B cell (primary cell): ENCODE measurements at regions of chr1 and their contacts with region 1.

Region 1: GRCh38 chr1:156689035-156689952 is 12.1 kb upstream of the NES start:
- DNase-seq: peak; percentile 85
- ATAC-seq: peak; percentile 98
- H3K4me3 ChIP-seq: no peak overlapping the region
- H3K4me3 Mint-ChIP-seq: no peak overlapping the region
- H3K27ac ChIP-seq: no peak overlapping the region
- H3K27ac Mint-ChIP-seq: no peak overlapping the region
- H3K4me1 ChIP-seq: peaks cover 11 to 25% of the 10 kb centered on the region in 2 donors
- H3K4me1 Mint-ChIP-seq: peaks cover 19% of the 10 kb centered on the region
- H3K27me3 ChIP-seq: peaks cover 0 to 68% (median 31%) of the 10 kb centered on the region in 4 experiments
- H3K27me3 Mint-ChIP-seq: peaks cover 48% of the 10 kb centered on the region
- CTCF ChIP-seq: peak; percentile 95

Region 2: GRCh38 chr1:156435545-156436141 is 253.7 kb before region 1 on chr1:
- CTCF ChIA-PET with region 1: no interaction called
- POLR2A ChIA-PET with region 1: no interaction called
- intact Hi-C with region 1: no loop called
- DNase-seq: peak; percentile 81
- ATAC-seq: peak; percentile 58
- H3K4me3 ChIP-seq: peak overlapping the region; percentile 16 to 69 (median 41)
- H3K4me3 Mint-ChIP-seq: peak overlapping the region; percentile 87
- H3K27ac ChIP-seq: no peak overlapping the region
- H3K27ac Mint-ChIP-seq: no peak overlapping the region
- H3K4me1 ChIP-seq: peaks cover 32 to 41% of the 10 kb centered on the region in 2 donors
- H3K4me1 Mint-ChIP-seq: peaks cover 20% of the 10 kb centered on the region
- H3K27me3 ChIP-seq: peaks cover 0 to 93% (median 82%) of the 10 kb centered on the region in 4 experiments
- H3K27me3 Mint-ChIP-seq: peaks cover 82% of the 10 kb centered on the region
- CTCF ChIP-seq: no peak

Region 3: DNA sequence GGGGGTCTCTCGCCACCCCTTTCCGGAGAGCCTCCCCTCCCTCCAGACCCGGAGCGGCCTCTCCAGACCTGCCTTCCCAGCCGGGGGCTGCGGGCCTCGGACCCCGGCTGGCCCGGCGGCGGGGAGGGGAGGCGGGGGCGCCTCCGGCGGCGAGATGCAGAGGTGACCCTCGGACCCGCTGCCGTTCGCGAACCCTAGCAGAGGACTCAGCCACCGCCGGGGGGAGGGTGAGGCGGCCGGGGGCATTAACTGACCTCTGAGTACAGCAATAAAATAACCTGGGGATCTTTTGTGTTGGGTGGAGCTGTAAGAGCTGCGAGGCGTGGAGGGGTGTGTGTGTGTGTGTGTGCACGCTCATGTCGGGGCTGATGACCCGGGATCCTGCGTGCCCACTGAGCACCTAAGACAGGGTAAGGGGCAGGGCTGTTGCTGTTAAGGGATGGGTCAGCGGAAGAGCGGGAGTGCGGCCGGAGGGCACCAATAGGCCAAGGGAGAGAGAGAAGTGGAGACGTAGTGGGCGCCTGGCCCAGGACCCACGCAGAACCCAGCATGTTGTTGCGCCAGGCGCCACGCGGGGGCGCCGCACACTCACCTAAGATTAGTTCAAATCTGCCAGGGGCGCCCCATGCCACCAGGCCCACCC is 63.7 kb before region 1 on chr1:
- CTCF ChIA-PET with region 1: interaction called, 16 read pairs
- POLR2A ChIA-PET with region 1: no interaction called
- intact Hi-C with region 1: no loop called
- DNase-seq: peak; percentile 86
- ATAC-seq: peak; percentile 75
- H3K4me3 ChIP-seq: peak overlapping the region in 4 of 5 experiments; percentile 19 to 50 (median 47)
- H3K4me3 Mint-ChIP-seq: peak overlapping the region; percentile 84
- H3K27ac ChIP-seq: no peak overlapping the region
- H3K27ac Mint-ChIP-seq: peak overlapping the region; percentile 2
- H3K4me1 ChIP-seq: peaks cover 22 to 26% of the 10 kb centered on the region in 2 donors
- H3K4me1 Mint-ChIP-seq: peaks cover 15% of the 10 kb centered on the region
- H3K27me3 ChIP-seq: peaks cover 2 to 66% (median 27%) of the 10 kb centered on the region in 4 experiments
- H3K27me3 Mint-ChIP-seq: peaks cover 49% of the 10 kb centered on the region
- CTCF ChIP-seq: peak; percentile 91

Region 4: GRCh38 chr1:156654700-156655099 is 34.6 kb before region 1 on chr1:
- CTCF ChIA-PET with region 1: no interaction called
- POLR2A ChIA-PET with region 1: no interaction called
- intact Hi-C with region 1: no loop called
- DNase-seq: no peak
- ATAC-seq: no peak
- H3K4me3 ChIP-seq: no peak overlapping the region
- H3K4me3 Mint-ChIP-seq: no peak overlapping the region
- H3K27ac ChIP-seq: no peak overlapping the region
- H3K27ac Mint-ChIP-seq: no peak overlapping the region
- H3K4me1 ChIP-seq: peaks cover 28 to 34% of the 10 kb centered on the region in 2 donors
- H3K4me1 Mint-ChIP-seq: peaks cover 38% of the 10 kb centered on the region
- H3K27me3 ChIP-seq: peaks cover 0 to 79% (median 40%) of the 10 kb centered on the region in 4 experiments
- H3K27me3 Mint-ChIP-seq: peaks cover 68% of the 10 kb centered on the region
- CTCF ChIP-seq: no peak

Region 5: DNA sequence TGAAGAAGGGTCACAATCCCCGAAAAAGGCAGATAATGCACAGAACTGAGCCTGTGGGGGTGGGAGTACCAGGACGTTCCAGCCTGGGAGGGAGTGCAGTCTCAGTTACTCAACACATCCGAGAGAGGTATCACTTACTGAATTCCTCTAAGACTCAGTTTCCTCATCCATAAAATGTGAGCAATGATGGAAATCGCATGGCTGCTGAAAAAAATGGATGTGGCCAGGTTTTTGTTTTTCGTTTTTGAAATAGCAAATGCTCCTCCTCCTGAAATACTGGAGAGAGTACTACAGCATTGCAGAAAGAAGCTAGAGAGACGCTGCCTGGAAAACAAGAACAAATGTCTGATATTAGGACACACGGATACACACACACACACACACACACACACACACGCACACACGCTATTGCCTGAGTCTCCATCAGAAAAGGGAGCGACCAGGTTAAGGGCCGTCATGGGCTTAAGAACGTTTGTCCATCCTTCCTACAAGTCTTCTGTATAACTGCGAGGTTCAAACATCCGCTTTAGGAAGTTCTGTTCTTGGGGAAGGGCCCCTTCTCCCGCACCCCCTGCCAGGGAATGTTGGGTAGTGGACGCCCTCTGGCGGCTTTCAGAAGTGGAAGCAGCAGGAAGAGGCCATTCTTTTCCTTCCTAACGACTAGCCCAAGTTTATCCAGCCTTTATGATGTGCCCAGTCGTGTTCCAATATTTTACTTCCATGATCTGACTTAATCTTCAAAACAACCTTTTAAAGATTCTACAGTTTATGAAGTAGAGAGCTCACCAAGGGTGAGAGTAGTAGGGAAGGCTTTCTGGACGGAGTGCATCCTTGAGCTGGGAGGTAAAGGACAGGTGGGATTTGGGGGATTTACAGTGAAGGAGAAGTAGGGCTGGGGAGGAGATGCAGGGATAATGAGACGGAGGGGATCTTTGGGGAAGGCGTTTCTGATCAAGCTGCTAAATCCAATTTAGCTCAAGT is 11.4 kb before region 1 on chr1:
- CTCF ChIA-PET with region 1: interaction called, 53 read pairs
- POLR2A ChIA-PET with region 1: interaction called, 3 read pairs
- intact Hi-C with region 1: no loop called
- DNase-seq: peak; percentile 78
- ATAC-seq: no peak
- H3K4me3 ChIP-seq: peak overlapping the region in 1 of 5 experiments; percentile 24
- H3K4me3 Mint-ChIP-seq: peak overlapping the region; percentile 53
- H3K27ac ChIP-seq: no peak overlapping the region
- H3K27ac Mint-ChIP-seq: peak overlapping the region; percentile 57
- H3K4me1 ChIP-seq: peaks cover 25 to 32% of the 10 kb centered on the region in 2 donors
- H3K4me1 Mint-ChIP-seq: peaks cover 25% of the 10 kb centered on the region
- H3K27me3 ChIP-seq: peaks cover 0 to 83% (median 47%) of the 10 kb centered on the region in 4 experiments
- H3K27me3 Mint-ChIP-seq: peaks cover 52% of the 10 kb centered on the region
- CTCF ChIP-seq: peak; percentile 67

Region 6: GRCh38 chr1:156711011-156711817 is 21.9 kb after region 1 on chr1:
- CTCF ChIA-PET with region 1: interaction called, 80 read pairs
- POLR2A ChIA-PET with region 1: interaction called, 3 read pairs
- intact Hi-C with region 1: loop called (anchors 1 kb)
- DNase-seq: no peak
- ATAC-seq: no peak
- H3K4me3 ChIP-seq: no peak overlapping the region
- H3K4me3 Mint-ChIP-seq: no peak overlapping the region
- H3K27ac ChIP-seq: no peak overlapping the region
- H3K27ac Mint-ChIP-seq: no peak overlapping the region
- H3K4me1 ChIP-seq: peaks cover 3 to 7% of the 10 kb centered on the region in 2 donors
- H3K4me1 Mint-ChIP-seq: peaks cover 8% of the 10 kb centered on the region
- H3K27me3 ChIP-seq: peaks cover 0 to 5% (median 2%) of the 10 kb centered on the region in 4 experiments
- H3K27me3 Mint-ChIP-seq: no peaks in the 10 kb centered on the region
- CTCF ChIP-seq: no peak

Region 7: DNA sequence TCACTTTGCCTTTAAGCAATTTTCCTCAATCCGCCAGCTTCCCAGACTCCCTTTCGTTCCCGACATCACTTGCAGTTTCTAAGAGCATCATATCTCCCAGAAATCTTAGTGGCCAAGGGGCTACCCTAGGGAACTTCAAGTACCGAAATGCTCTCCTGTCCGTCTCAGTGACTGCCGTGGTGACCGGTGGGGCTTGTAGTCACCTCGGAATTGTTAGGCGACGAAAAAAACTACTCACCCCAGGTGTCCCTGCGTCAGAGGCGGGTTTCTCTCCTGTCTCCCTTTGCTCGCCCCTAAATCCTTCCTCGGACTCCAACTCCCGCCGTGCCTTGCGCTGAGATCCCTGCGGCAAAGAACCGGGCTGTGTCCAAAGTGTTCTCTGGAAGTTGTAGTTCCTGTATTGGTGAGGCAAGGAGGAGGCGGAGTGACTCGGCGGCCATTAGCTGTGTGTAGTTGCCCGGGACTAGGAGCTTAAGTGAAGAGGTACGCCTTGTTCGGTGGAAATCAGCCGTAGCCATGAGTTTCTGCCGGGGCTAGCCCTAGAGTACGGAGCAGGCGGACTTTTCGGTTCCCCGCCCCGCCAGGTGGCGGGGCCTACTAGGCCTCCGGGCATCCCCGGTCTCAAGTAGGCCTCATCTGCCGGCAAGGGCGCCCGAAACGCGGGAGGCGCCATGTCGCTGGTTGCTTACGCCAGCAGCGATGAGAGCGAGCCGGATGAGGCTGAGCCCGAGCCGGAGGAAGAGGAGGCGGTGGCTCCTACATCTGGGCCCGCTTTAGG is 78.0 kb after region 1 on chr1 and contains the start of gene PRCC:
- CTCF ChIA-PET with region 1: interaction called, 8 read pairs
- POLR2A ChIA-PET with region 1: no interaction called
- intact Hi-C with region 1: loop called (anchors 5 kb)
- DNase-seq: peak; percentile 99
- ATAC-seq: peak; percentile 89
- H3K4me3 ChIP-seq: peak within 1 kb of the TSS; percentile 76 to 97 (median 86)
- H3K4me3 Mint-ChIP-seq: no peak within 1 kb of the TSS
- H3K27ac ChIP-seq: peak within 1 kb of the TSS; percentile 91 to 97
- H3K27ac Mint-ChIP-seq: no peak within 1 kb of the TSS
- H3K4me1 ChIP-seq: peaks cover 27 to 29% of the 10 kb centered on the region in 2 donors
- H3K4me1 Mint-ChIP-seq: peaks cover 30% of the 10 kb centered on the region
- H3K27me3 ChIP-seq: no peaks in the 10 kb centered on the region
- H3K27me3 Mint-ChIP-seq: no peaks in the 10 kb centered on the region
- CTCF ChIP-seq: no peak
- total RNA-seq, gene PRCC: 83.4 and 91.0 TPM in 2 replicates

Region 8: GRCh38 chr1:156892190-156893047 is 203.1 kb after region 1 on chr1:
- CTCF ChIA-PET with region 1: interaction called, 84 read pairs
- POLR2A ChIA-PET with region 1: no interaction called
- intact Hi-C with region 1: no loop called
- DNase-seq: peak; percentile 83
- ATAC-seq: peak; percentile 85
- H3K4me3 ChIP-seq: peak overlapping the region in 2 of 5 experiments; percentile 2 to 17
- H3K4me3 Mint-ChIP-seq: peak overlapping the region; percentile 78
- H3K27ac ChIP-seq: no peak overlapping the region
- H3K27ac Mint-ChIP-seq: no peak overlapping the region
- H3K4me1 ChIP-seq: peaks cover 21 to 24% of the 10 kb centered on the region in 2 donors
- H3K4me1 Mint-ChIP-seq: peaks cover 15% of the 10 kb centered on the region
- H3K27me3 ChIP-seq: peaks cover 0 to 66% (median 28%) of the 10 kb centered on the region in 4 experiments
- H3K27me3 Mint-ChIP-seq: peaks cover 68% of the 10 kb centered on the region
- CTCF ChIP-seq: peak; percentile 76